ENCODE measurements at regions of chr9 and their contacts with region 1.

Region 1: DNA sequence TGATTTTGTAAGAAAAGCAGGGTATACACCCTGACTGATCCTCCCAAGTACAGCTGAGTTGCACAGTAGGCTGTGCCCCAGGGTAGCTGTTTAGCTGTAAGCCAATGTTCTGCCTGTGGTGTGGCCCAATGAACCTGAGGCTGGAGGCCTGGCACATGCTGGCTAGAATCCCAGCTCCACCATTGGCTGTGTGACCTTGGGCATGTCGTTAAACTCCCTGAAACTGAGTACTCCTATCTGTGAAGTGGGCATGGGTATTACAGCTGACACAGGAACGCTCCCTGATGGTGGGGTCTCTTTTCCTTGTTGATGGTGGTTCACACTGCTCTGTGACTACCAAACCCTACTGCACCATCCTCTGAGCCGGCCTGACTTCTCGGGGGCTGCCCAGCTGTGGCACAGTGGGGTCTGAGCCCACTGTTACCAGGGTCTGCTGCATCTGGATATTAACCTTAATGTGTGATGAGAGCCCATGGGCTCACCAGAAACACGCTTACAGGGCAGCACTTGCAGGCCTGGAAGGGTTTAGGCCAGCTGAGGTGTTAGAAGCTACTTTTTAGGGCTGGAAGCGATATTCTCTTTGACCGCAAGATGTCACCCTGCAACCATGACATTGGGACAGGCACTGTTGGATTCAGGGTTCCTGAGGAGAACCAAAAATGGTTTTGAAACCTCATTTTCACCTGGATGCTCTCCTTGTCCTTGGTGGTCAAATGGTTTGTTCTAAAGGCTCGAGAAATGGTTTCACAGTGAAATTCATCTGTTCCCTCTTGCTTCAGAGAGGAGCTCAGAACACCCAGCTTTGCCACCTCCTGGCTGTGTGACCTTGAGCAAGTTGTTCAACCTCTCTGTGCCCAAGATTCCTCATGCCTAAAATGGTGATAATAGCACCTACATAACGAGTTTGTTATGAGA is 6.8 kb upstream of the GADD45G start:
- DNase-seq: peak; percentile 71 to 85 (median 76)
- H3K4me3 ChIP-seq: no peak overlapping the region
- H3K27ac ChIP-seq: no peak overlapping the region
- H3K4me1 ChIP-seq: peaks cover 0 to 11% (median 6%) of the 10 kb centered on the region in 4 experiments
- H3K27me3 ChIP-seq: peaks cover 0 to 2% (median 0%) of the 10 kb centered on the region in 5 experiments

Region 2: GRCh38 chr9:89576404-89576839 is 21.5 kb before region 1 on chr9:
- CTCF ChIA-PET with region 1: interaction called, 63 read pairs
- POLR2A ChIA-PET with region 1: no interaction called
- DNase-seq: peak; percentile 63 to 74 (median 69)
- H3K4me3 ChIP-seq: no peak overlapping the region
- H3K27ac ChIP-seq: no peak overlapping the region
- H3K4me1 ChIP-seq: peaks cover 4 to 24% (median 17%) of the 10 kb centered on the region in 4 experiments
- H3K27me3 ChIP-seq: no peaks in the 10 kb centered on the region

Region 3: DNA sequence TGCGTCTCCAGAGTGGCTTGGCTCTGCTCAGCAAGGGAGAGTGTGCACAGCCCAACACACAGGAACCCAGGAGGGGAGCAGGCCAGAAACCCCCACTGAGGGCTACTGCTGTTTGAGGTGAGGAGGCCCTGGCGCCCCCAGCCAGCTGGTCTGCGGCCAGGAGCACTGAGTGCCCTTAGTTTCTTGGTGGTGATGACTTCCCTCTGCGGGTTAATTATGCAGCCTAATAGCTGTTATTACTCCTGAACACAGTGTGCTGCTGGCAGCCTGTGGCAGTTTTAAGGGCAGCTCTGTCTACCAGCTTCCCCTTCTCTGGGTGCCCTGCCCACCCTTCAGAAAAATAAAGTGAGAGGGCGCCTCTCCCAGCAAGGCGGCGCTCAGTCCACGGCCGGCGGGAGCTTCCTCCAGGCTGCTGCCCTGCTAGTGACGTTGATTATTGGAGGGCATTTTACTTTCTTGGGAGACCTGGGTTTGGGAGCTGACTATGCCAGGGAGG is 26.0 kb after region 1 on chr9:
- CTCF ChIA-PET with region 1: interaction called, 25 read pairs
- POLR2A ChIA-PET with region 1: no interaction called
- DNase-seq: peak; percentile 62 to 92 (median 90)
- H3K4me3 ChIP-seq: peak overlapping the region in 1 of 7 experiments; percentile 2
- H3K27ac ChIP-seq: no peak overlapping the region
- H3K4me1 ChIP-seq: peaks cover 0 to 24% (median 19%) of the 10 kb centered on the region in 4 experiments
- H3K27me3 ChIP-seq: peaks cover 0 to 16% (median 6%) of the 10 kb centered on the region in 5 experiments

Region 4: GRCh38 chr9:89664896-89665329 is 66.9 kb after region 1 on chr9:
- CTCF ChIA-PET with region 1: no interaction called
- POLR2A ChIA-PET with region 1: no interaction called
- DNase-seq: no peak
- H3K4me3 ChIP-seq: no peak overlapping the region
- H3K27ac ChIP-seq: no peak overlapping the region
- H3K4me1 ChIP-seq: peaks cover 13 to 26% (median 16%) of the 10 kb centered on the region in 4 experiments
- H3K27me3 ChIP-seq: peaks cover 0 to 4% (median 0%) of the 10 kb centered on the region in 5 experiments

Region 5: GRCh38 chr9:89684901-89685636 is 87.1 kb after region 1 on chr9:
- CTCF ChIA-PET with region 1: no interaction called
- POLR2A ChIA-PET with region 1: no interaction called
- DNase-seq: no peak
- H3K4me3 ChIP-seq: no peak overlapping the region
- H3K27ac ChIP-seq: no peak overlapping the region
- H3K4me1 ChIP-seq: no peaks in the 10 kb centered on the region
- H3K27me3 ChIP-seq: peaks cover 0 to 2% (median 0%) of the 10 kb centered on the region in 5 experiments

Region 6: DNA sequence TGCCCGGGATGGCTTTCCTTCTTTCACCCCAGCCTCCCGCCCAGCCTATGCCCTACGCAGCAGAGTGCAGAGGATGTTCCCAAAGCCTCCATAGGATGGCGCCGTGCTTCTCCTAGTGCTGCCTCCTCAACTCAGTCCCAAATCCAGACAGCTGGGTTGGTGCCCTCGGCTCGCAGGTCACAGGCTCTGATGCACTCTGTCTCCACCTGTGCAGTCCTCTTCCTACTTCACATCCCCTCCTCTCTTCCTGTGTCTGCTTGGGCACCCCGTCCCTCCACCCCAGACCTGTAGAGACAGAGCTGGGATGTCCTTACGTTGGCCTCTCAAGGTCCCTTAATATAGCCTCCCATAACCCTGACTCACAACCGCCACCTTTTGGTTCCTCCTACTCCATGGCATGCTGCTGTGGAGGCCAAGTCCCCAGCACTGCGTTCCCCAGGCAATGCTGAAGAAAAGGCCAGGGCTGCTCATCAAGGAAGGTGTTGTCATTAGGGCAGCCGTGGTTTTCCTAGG is 321.3 kb after region 1 on chr9:
- CTCF ChIA-PET with region 1: interaction called, 22 read pairs
- POLR2A ChIA-PET with region 1: no interaction called
- DNase-seq: peak; percentile 68 to 83 (median 80)
- H3K4me3 ChIP-seq: no peak overlapping the region
- H3K27ac ChIP-seq: no peak overlapping the region
- H3K4me1 ChIP-seq: peaks cover 0 to 5% (median 0%) of the 10 kb centered on the region in 4 experiments
- H3K27me3 ChIP-seq: peaks cover 0 to 3% (median 0%) of the 10 kb centered on the region in 5 experiments

Region 7: DNA sequence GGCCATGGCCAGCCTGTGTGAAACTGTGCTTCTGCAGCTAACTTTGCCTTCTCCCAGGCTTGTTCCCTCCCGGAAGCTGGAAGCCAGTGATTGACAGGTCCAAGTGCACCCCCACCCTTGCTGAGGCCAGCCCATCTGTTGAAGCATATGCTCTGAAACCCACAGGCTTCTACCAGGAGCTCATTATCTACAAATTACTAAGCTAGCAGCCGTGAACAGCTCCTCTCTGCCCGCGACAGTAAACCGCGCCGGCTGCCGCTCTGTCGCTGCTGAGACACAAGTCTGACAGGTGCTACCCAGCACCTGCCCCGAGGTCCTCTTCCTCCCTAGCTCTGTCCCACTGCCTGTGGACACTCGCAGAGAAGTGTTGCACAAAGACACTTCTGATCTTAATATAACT is 497.7 kb after region 1 on chr9:
- CTCF ChIA-PET with region 1: interaction called, 323 read pairs
- POLR2A ChIA-PET with region 1: no interaction called
- DNase-seq: peak in 2 of 3 donors; percentile 50 to 67
- H3K4me3 ChIP-seq: no peak overlapping the region
- H3K27ac ChIP-seq: no peak overlapping the region
- H3K4me1 ChIP-seq: peaks cover 0 to 18% (median 4%) of the 10 kb centered on the region in 4 experiments
- H3K27me3 ChIP-seq: peaks cover 0 to 12% (median 0%) of the 10 kb centered on the region in 5 experiments

Measured in common myeloid progenitor, CD34-positive (primary cell).